ENCODE measurements at regions of chr4 and their contacts with region 1.

Region 1: DNA sequence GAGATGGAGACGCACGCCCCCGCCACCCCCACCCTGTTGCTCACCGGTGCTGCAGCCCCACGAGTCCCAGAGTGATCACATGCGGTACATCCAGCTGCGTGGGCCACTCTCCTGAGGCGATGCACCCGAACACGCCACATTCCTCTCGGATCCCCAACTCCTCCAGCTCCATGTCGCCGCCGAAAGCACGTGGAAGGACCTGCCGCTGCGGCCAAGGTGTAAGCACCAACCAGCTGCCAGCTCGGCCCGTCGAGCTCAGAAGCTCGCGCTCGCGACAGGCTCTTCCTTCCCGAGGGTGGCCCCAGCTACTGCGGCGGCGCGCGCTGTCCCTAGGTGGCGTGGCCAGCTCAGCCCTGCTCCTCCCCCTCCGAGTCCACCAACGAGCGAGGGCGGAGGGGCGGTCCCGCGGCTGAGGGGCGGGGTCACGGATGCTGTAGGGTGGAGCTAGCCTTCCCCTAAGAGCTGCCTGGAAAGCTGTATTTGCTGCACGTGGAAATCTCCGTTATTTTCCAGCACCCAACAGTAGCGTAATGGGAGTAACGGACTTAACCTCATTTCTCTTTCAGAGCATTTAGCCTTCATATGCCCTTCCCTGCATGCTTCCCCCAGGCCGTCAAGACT is at the start of gene PPAT:
- DNase-seq: peak; percentile 98
- H3K4me3 ChIP-seq: peak within 1 kb of the TSS; percentile 69 to 84 (median 74)
- H3K27ac ChIP-seq: peak within 1 kb of the TSS; percentile 92 to 98 (median 96)
- H3K4me1 ChIP-seq: peaks cover 4 to 29% (median 23%) of the 10 kb centered on the region in 4 donors
- H3K27me3 ChIP-seq: no peaks in the 10 kb centered on the region
- CTCF ChIP-seq: peak in 2 of 3 experiments; percentile 24 to 37
- EP300 ChIP-seq: no peak
- POLR2A ChIP-seq: peak; percentile 20
- total RNA-seq, gene PPAT: 1.7 to 5.1 (median 3.0) TPM

Region 2: GRCh38 chr4:56387023-56388001 is 48.1 kb before region 1 on chr4 and contains the start of gene AASDH:
- intact Hi-C with region 1: loop called (anchors 5 kb)
- DNase-seq: peak; percentile 97
- H3K4me3 ChIP-seq: peak within 1 kb of the TSS; percentile 73 to 78 (median 76)
- H3K27ac ChIP-seq: peak within 1 kb of the TSS; percentile 89 to 96 (median 92)
- H3K4me1 ChIP-seq: peaks cover 18 to 35% (median 26%) of the 10 kb centered on the region in 4 donors
- H3K27me3 ChIP-seq: no peaks in the 10 kb centered on the region
- CTCF ChIP-seq: no peak
- EP300 ChIP-seq: no peak
- POLR2A ChIP-seq: peak; percentile 70
- total RNA-seq, gene AASDH: 5.2 to 9.3 (median 6.3) TPM

Region 3: GRCh38 chr4:56467284-56468096 is 32.1 kb after region 1 on chr4 and contains the start of gene SRP72:
- intact Hi-C with region 1: loop called (anchors 2 kb)
- DNase-seq: peak; percentile 95
- H3K4me3 ChIP-seq: peak within 1 kb of the TSS; percentile 80 to 100 (median 90)
- H3K27ac ChIP-seq: peak within 1 kb of the TSS; percentile 83 to 92 (median 90)
- H3K4me1 ChIP-seq: peaks cover 29 to 46% (median 43%) of the 10 kb centered on the region in 4 donors
- H3K27me3 ChIP-seq: no peaks in the 10 kb centered on the region
- CTCF ChIP-seq: no peak
- EP300 ChIP-seq: no peak
- POLR2A ChIP-seq: no peak
- total RNA-seq, gene SRP72: 37.0 to 51.9 (median 45.8) TPM